ENCODE measurements at regions of chr7 and their contacts with region 1.

Region 1: DNA sequence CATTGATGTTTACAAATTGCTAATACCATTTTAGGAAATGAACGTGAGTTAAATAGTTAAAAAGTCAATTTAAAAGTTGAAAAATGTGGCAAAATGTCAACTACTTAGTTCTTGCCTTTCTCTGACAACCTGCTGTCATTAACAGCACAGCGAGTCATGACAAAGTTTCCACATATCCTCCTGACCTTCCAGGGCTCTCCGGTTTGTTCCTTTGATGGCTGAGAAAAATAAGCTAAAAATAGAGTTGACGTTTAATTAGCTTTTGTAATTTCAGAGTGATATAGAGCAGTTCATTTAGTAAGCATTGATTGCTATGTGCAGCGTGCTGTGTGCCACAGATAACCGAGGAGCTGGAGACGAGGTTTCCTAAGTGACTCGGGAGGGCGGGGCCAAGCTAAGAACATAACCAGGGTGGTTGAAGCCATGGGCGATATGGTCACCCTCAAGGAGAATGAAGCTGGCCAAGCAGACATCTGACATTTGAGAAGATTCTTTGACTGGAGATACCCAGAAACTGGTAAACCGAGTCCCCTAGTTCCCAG is 47.9 kb downstream of the OGDH start:
- DNase-seq: peak in 1 of 2 donors; percentile 54
- ATAC-seq: peak; percentile 53 to 83 (median 74)
- H3K4me3 ChIP-seq: no peak overlapping the region
- H3K27ac ChIP-seq: peak overlapping the region; percentile 14 to 85 (median 78)
- H3K4me1 ChIP-seq: peaks cover 0 to 30% (median 10%) of the 10 kb centered on the region in 9 donors
- H3K27me3 ChIP-seq: no peaks in the 10 kb centered on the region
- CTCF ChIP-seq: no peak

Region 2: GRCh38 chr7:44671069-44671468 is 16.7 kb after region 1 on chr7:
- intact Hi-C with region 1: loop called in 2 of 10 experiments (anchors 1 kb)
- DNase-seq: no peak
- ATAC-seq: peak; percentile 55 to 80 (median 68)
- H3K4me3 ChIP-seq: no peak overlapping the region
- H3K27ac ChIP-seq: peak overlapping the region in 7 of 10 donors; percentile 17 to 67 (median 42)
- H3K4me1 ChIP-seq: peaks cover 0 to 12% (median 0%) of the 10 kb centered on the region in 9 donors
- H3K27me3 ChIP-seq: no peaks in the 10 kb centered on the region
- CTCF ChIP-seq: no peak

Region 3: GRCh38 chr7:45242813-45243555 is 588.7 kb after region 1 on chr7:
- intact Hi-C with region 1: no loop called
- DNase-seq: no peak
- ATAC-seq: no peak
- H3K4me3 ChIP-seq: no peak overlapping the region
- H3K27ac ChIP-seq: peak overlapping the region in 5 of 10 donors; percentile 30 to 85 (median 55)
- H3K4me1 ChIP-seq: peaks cover 0 to 58% (median 12%) of the 10 kb centered on the region in 9 donors
- H3K27me3 ChIP-seq: peaks cover 0 to 28% (median 2%) of the 10 kb centered on the region in 7 donors
- CTCF ChIP-seq: no peak

Measured in heart right ventricle (tissue), 16 donors.